Activated T-helper 2 cell treated with anti-CD3 and anti-CD28 coated beads, Interferon-gamma antibody, Interleukin-2, Interleukin-4, amounts not matched to agents 10 μg/mL and 5 μg/mL and 100 μg/mL, durations not matched to agents 14 hours and 24 hours and 36 hours (primary cell): ENCODE measurements at regions of chr1 and their contacts with region 1.

Region 1: DNA sequence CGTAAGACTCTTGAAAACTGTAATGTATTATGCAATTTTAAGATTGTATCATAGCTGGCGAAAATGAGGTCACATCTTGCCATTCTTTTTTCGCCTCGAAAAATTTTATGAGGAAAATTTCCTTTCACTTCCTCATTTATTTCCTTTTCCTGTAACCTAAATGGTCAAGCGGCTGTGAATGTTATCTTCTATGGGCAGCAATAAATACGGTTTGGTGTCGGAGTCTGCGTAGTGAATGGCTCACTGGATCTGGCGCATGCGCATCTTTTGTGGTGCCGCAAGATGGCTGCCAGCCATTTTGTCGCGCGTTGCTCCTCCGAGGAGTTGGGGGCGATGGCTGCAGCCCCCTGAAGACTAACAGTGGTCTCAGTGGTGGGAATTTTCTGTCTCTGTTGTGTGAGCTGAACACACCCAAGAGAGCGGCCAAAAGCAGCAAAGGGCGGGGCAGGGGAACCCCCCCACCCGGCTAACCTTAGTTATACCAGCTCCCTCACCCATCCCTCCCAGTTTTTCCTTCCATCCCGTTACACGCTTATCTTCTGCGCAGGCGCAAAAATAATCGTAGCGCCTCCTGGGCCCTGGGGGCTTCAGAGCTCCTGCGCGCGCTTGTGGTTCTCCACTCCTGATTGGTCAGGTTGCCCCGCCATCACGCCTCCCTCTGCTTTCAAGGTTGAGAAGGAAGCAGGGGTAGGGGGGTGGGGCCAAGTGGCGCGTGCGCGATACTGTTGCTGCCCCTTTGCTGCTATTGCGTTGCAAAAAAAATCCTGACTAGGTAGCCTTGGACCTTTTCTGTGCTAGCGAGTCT is at the start of gene RPRD2:
- DNase-seq: peak; percentile 99
- H3K4me3 Mint-ChIP-seq: peak within 1 kb of the TSS; percentile 93
- H3K27ac Mint-ChIP-seq: peak within 1 kb of the TSS; percentile 99
- H3K4me1 Mint-ChIP-seq: peaks cover 23% of the 10 kb centered on the region
- H3K27me3 Mint-ChIP-seq: no peaks in the 10 kb centered on the region
- total RNA-seq, gene RPRD2: 21.9 and 22.8 TPM in 2 replicates

Region 2: DNA sequence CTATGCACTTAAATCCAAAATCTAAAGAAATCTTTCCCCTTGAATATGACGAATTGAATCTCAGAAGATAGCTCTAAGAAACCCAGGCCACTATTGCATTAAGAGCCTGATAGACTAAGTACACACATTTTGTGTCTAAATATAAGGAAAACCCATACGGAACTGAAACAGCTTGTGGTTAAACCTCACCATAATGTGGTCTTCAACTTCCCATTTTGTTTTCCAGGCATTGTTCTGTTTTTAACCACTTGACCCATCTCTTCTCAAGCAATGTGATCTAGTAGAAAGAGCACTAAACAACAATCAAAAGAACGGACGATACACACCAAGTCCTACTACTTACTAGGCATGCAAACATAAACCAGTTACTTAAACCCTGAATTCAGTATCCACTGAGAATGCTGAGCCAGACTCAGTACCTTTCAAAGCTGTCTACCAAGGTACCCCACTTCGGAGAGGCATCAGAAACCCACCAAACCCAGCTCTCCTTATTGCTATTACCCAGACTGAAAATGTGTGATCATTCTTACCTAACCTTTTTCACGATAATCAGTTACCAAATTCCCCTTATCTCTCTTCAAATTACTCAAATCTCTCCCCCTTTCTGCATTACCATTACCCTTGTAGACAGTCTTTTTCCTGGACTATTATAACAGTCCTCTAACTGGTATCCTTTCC is 365.9 kb before region 1 on chr1:
- intact Hi-C with region 1: no loop called
- DNase-seq: no peak
- H3K4me3 Mint-ChIP-seq: no peak overlapping the region
- H3K27ac Mint-ChIP-seq: peak overlapping the region; percentile 45
- H3K4me1 Mint-ChIP-seq: peaks cover 54% of the 10 kb centered on the region
- H3K27me3 Mint-ChIP-seq: peaks cover 2% of the 10 kb centered on the region

Region 3: GRCh38 chr1:150268705-150269403 is 94.8 kb before region 1 on chr1 and contains the start of gene APH1A:
- intact Hi-C with region 1: loop called (anchors 5 kb)
- DNase-seq: peak; percentile 92
- H3K4me3 Mint-ChIP-seq: peak within 1 kb of the TSS; percentile 91
- H3K27ac Mint-ChIP-seq: peak within 1 kb of the TSS; percentile 80
- H3K4me1 Mint-ChIP-seq: peaks cover 17% of the 10 kb centered on the region
- H3K27me3 Mint-ChIP-seq: no peaks in the 10 kb centered on the region
- total RNA-seq, gene APH1A: 103 and 105 TPM in 2 replicates

Region 4: GRCh38 chr1:150429805-150430204 is 66.2 kb after region 1 on chr1:
- intact Hi-C with region 1: loop called (anchors 5 kb)
- DNase-seq: no peak
- H3K4me3 Mint-ChIP-seq: no peak overlapping the region
- H3K27ac Mint-ChIP-seq: peak overlapping the region; percentile 64
- H3K4me1 Mint-ChIP-seq: peaks cover 10% of the 10 kb centered on the region
- H3K27me3 Mint-ChIP-seq: no peaks in the 10 kb centered on the region

Region 5: DNA sequence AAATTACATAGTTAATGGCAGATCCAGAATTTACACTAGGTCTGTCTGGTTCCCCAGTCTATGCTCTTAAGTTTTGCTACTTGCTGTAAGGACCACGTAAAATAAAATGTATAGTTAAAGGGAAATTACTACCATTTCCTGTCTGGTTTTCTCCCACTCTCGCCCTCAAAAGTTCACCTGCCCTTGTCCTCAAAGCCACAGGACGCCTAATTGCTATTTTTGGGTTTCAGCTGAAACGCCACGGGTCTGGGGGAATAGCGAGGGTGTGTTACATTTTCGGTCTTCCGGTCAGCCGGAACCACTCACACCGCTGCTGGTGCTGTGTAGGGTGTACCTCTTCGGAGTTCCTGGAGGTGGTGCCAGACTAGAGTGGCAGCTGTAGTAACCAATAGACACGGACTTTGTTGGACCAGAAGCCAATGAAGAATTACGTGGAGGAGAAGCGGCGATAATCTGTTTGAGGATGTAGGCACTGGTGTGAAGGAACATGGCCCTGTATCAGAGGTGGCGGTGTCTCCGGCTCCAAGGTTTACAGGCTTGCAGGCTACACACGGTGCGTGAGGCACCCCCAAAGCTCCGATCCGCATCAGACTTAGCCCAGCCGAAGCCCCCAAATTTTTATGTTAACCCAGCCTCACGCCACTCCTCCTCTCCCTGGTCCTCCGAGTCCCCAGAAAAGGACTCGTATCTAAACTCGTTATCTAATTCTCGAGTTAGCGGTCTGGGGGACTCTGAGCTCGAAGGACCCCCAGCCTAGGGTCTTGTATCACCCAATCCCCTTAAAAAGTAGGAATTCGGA is 123.5 kb after region 1 on chr1 and contains the start of gene TARS2:
- intact Hi-C with region 1: loop called (anchors 2 kb)
- DNase-seq: peak; percentile 95
- H3K4me3 Mint-ChIP-seq: peak within 1 kb of the TSS; percentile 98
- H3K27ac Mint-ChIP-seq: peak within 1 kb of the TSS; percentile 98
- H3K4me1 Mint-ChIP-seq: peaks cover 18% of the 10 kb centered on the region
- H3K27me3 Mint-ChIP-seq: no peaks in the 10 kb centered on the region
- total RNA-seq, gene TARS2: 66.2 and 69.8 TPM in 2 replicates

Region 6: DNA sequence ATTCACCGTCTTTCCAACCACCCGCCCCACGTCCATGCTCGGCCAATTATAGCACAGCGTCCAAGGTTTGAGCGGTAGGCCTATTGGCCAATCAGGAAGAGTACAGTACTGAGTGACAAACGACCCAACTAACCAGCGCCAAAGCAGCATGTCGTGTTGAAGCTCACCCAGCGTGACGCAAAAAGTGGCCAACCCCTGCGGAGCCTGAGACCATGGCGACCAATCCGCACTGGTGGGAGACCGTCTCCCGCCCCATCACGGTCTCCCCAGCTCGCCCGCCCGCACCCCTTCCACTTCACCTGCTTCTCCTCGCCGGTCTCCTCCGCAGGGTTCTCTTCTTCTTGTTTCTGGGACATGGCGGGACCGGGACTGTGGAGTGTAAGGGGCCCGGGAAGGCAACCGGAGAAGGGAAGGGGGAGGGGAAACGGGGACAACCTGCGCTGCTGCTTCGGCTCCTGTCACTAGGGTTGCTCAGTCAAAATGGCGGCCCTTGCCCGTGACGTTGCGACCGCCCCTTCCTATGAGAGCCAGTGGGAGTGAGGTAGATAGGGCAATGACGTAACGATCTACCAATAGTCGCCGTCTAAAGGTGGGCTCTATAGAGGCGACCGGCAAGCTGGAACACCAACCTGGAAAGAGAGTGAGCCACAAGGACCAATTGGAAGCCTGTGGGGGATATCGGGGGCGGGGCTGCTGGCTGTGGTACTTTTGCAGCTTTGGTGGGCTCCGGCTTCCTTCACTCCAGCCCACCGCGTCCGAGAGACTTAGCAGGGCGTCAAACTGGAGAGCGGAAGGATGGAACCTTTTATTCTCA is 265.7 kb after region 1 on chr1 and contains the start of gene ENSA:
- intact Hi-C with region 1: loop called (anchors 10 kb)
- DNase-seq: peak; percentile 96
- H3K4me3 Mint-ChIP-seq: no peak within 1 kb of the TSS
- H3K27ac Mint-ChIP-seq: no peak within 1 kb of the TSS
- H3K4me1 Mint-ChIP-seq: peaks cover 41% of the 10 kb centered on the region
- H3K27me3 Mint-ChIP-seq: no peaks in the 10 kb centered on the region
- total RNA-seq, gene ENSA: 252 and 253 TPM in 2 replicates